K562 (cell line): ENCODE measurements at regions of chr12 and their contacts with region 1.

Region 1: GRCh38 chr12:54993161-54993835 is 8.7 kb upstream of the TESPA1 start:
- DNase-seq: peak; percentile 65 to 79 (median 68)
- ATAC-seq: peak; percentile 88
- H3K4me3 ChIP-seq: no peak overlapping the region
- H3K27ac ChIP-seq: no peak overlapping the region
- H3K4me1 ChIP-seq: peaks cover 3 to 20% of the 10 kb centered on the region in 2 experiments; a peak in 4 of 5 replicates
- H3K27me3 ChIP-seq: peaks cover 0 to 7% of the 10 kb centered on the region in 2 experiments; a peak in 1 of 5 replicates
- CTCF ChIP-seq: peak; percentile 81 to 90 (median 81)
- EP300 ChIP-seq: no peak
- POLR2A ChIP-seq: no peak
- RAD21 ChIP-seq: peak; percentile 94 to 96

Region 2: DNA sequence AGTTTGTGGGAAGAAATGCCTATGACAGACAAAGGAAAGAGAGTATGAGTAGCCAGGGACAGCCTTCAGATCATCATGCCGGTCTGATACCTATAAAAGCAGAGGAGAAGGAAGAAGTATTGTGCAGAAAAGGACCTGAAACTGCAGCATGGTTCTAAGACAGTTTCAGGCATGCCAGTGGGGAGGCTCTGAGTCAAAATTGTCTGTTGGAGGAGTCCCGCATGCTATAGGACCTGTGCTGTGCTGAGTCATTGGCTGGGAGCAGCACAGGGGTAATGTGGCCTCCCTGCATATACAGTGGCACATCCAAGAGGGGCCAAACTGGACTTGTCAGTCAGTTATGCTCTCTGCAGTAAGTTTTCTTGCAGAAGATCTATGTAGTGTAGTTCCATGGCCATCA is 67.2 kb after region 1 on chr12:
- CTCF ChIA-PET with region 1: no interaction called
- POLR2A ChIA-PET with region 1: no interaction called
- in situ Hi-C with region 1: loop called (anchors 5 kb)
- intact Hi-C with region 1: no loop called
- DNase-seq: peak; percentile 12 to 57 (median 38)
- ATAC-seq: peak; percentile 90
- H3K4me3 ChIP-seq: no peak overlapping the region
- H3K27ac ChIP-seq: no peak overlapping the region; the same call in 2 of the 3 replicates
- H3K4me1 ChIP-seq: peaks cover 0 to 9% of the 10 kb centered on the region in 2 experiments; a peak in 2 of 5 replicates
- H3K27me3 ChIP-seq: 0 out of 5 replicates have a peak, but pooled peaks cover under 1 to 2% of the 10 kb centered on the region in 2 experiments
- CTCF ChIP-seq: no peak
- EP300 ChIP-seq: no peak
- POLR2A ChIP-seq: no peak
- RAD21 ChIP-seq: no peak